Heart left ventricle (tissue), 16 donors: ENCODE measurements at regions of chr5 and their contacts with region 1.

Region 1: DNA sequence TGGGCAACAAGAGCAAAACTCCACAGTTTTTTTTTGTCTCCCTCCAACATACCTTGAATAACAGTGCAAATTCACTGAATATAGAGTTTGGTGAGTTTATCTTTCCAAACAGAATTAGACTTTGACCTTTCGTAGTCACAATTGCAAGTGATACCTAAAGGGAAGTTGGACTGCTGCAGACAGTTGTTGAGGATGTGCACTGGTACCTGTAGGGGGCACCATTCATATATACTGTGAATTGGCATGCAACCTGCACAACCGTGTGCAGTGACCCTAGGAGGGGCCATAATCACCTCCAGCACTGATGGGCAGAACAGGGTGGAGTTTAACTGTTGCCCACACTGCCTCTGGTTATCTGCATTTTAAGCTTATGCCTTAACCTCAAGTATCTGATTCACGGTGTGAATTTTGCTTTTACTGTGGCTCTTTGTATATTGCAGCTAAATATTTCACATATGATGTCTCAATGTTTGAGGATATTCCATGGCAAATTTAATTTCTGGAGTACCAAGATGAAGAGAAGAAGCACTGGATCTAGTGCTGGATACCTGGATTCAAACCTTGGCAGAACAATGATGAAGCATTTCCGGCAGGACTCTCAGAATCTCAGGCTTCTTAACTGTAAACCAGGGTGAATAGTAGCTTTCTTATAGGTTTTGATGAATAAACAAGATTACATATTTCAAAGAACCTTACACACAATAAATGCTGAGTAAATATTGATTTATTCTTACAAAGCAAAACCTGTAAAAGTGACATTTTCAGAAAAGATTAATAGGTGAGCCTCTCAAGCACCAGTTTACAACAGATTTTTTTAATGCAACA is 144.3 kb downstream of the ACTBL2 start:
- DNase-seq: no peak
- ATAC-seq: peak in 1 of 4 donors; percentile 57
- H3K4me3 ChIP-seq: no peak overlapping the region
- H3K27ac ChIP-seq: no peak overlapping the region
- H3K4me1 ChIP-seq: peaks cover 0 to 6% (median 0%) of the 10 kb centered on the region in 12 donors
- H3K27me3 ChIP-seq: no peaks in the 10 kb centered on the region
- CTCF ChIP-seq: peak in 11 of 12 donors; percentile 19 to 50 (median 33)
- POLR2A ChIP-seq: no peak

Region 2: GRCh38 chr5:57267805-57268204 is 70.5 kb before region 1 on chr5:
- intact Hi-C with region 1: no loop called
- DNase-seq: no peak
- ATAC-seq: peak in 1 of 4 donors; percentile 30
- H3K4me3 ChIP-seq: no peak overlapping the region
- H3K27ac ChIP-seq: no peak overlapping the region
- H3K4me1 ChIP-seq: peaks cover 0 to 5% (median 0%) of the 10 kb centered on the region in 12 donors
- H3K27me3 ChIP-seq: no peaks in the 10 kb centered on the region
- CTCF ChIP-seq: no peak
- POLR2A ChIP-seq: no peak

Region 3: DNA sequence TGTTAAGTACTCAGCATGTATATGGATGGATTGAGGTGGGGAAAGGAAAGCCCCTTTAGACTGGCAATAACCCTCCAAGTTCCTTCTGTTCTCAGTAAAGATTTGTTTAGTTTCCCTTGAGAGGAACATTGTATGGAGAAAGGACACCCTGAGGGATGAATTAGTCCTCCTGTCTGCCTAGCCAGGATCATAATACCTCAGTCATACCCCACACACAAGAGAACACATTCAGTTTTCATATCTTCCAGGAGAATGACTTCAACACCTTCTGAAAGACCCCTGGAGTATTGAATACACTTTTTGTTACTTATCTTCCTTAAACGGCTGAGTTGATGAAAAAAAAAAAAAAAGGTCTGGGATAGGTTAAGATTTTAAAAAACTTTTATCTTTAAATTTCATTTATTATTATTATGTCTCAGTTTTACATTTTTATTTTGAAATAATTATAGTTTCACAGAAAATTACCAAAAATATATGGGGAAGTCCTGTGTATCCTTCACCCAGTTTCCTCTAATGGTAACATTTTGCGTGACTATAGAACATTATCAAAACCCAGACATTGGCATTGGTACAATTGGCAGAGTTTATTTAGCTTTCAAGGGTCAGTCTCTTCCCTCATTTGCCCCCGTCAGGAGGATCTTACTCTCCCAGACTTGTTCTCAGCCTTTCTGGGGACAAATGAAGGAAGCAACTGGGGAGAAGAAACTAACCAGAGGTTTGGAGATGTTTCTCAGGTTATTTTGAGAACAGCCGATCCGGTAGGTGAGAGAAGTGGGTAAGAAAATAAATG is 56.3 kb after region 1 on chr5:
- intact Hi-C with region 1: loop called in 1 of 10 experiments (anchors 10 kb)
- DNase-seq: no peak
- ATAC-seq: no peak
- H3K4me3 ChIP-seq: no peak overlapping the region
- H3K27ac ChIP-seq: no peak overlapping the region
- H3K4me1 ChIP-seq: no peaks in the 10 kb centered on the region
- H3K27me3 ChIP-seq: no peaks in the 10 kb centered on the region
- CTCF ChIP-seq: no peak
- POLR2A ChIP-seq: no peak

Region 4: DNA sequence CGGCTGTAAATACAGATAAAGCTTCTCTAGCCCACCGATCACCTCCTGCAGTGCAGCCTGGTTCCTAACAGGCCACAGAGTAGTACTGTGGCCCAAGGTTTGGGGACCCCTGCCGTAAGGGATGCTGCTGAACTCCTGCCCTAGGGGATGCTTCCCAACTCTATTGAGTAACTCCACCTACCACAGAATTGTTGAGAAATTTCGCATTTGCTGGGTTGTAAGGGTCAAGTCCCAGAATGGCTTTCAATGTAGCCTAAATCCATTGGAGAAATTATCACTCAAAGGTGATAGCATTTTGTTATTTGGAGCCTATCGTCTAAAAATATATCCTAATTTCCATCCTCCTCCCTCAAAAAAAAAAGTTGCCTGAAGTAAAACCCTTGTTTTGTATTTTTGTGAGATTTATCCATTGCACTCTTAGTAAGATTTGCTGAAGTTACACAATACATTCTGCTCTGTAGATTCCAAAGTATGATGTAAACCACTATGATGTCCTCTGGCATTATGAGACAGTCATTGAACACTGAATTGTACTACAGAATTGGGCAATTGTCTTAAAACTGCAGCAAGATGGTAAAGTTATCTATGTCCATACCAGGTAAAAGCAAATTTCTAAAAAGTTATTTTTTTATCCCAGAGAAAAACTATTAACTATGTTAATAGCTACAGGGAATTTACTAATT is 130.3 kb after region 1 on chr5:
- intact Hi-C with region 1: loop called in 1 of 10 experiments (anchors 10 kb)
- DNase-seq: no peak
- ATAC-seq: no peak
- H3K4me3 ChIP-seq: no peak overlapping the region
- H3K27ac ChIP-seq: no peak overlapping the region
- H3K4me1 ChIP-seq: no peaks in the 10 kb centered on the region
- H3K27me3 ChIP-seq: no peaks in the 10 kb centered on the region
- CTCF ChIP-seq: no peak
- POLR2A ChIP-seq: no peak